B cell (primary cell): ENCODE measurements at regions of chr1 and their contacts with region 1.

Region 1: GRCh38 chr1:22420455-22421053 is 31.1 kb upstream of the ZBTB40 start:
- DNase-seq: peak; percentile 51
- ATAC-seq: peak; percentile 51
- H3K4me3 ChIP-seq: no peak overlapping the region
- H3K4me3 Mint-ChIP-seq: no peak overlapping the region
- H3K27ac ChIP-seq: no peak overlapping the region
- H3K27ac Mint-ChIP-seq: no peak overlapping the region
- H3K4me1 ChIP-seq: peaks cover 4 to 14% of the 10 kb centered on the region in 2 donors
- H3K4me1 Mint-ChIP-seq: peaks cover 11% of the 10 kb centered on the region
- H3K27me3 ChIP-seq: peaks cover 0 to 30% (median 12%) of the 10 kb centered on the region in 4 experiments
- H3K27me3 Mint-ChIP-seq: peaks cover 52% of the 10 kb centered on the region
- CTCF ChIP-seq: peak; percentile 31

Region 2: DNA sequence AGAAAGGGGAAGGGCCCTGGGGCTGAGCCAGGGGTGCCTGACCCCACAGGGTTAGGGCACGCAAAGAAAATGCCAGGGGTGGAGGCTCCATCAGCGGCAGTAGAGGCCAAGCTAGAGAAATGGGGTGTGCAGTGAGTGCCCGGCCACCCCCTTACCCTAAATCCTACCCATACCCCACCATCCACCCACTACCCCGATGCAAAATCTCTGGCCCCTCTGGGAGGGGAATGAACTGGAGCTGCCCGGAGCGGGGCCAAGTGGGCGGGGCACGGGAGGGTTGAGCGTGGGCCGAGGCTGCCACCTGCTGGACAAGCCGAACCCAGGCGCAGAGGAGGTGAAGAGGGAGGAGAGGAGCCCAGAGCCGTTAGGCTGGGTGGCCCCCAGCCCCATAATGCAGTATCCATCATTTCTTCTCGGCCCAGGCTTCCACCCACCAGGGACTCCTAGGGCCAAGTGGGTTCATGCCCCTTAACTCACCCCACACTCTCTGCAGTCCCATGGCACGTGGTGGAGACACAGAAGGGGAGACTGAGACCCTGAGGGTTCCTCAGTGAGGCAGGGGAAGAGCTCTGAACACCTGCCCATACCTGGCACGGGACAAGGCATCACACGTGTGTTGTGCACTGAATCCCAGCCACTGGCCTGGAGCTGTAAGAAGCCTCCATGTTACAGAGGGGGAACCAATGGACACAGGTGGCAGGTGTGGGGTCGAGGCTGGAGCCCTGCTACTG is 221.5 kb after region 1 on chr1:
- CTCF ChIA-PET with region 1: interaction called, 26 read pairs
- POLR2A ChIA-PET with region 1: no interaction called
- intact Hi-C with region 1: no loop called
- DNase-seq: peak; percentile 73
- ATAC-seq: peak; percentile 81
- H3K4me3 ChIP-seq: no peak overlapping the region
- H3K4me3 Mint-ChIP-seq: no peak overlapping the region
- H3K27ac ChIP-seq: no peak overlapping the region
- H3K27ac Mint-ChIP-seq: no peak overlapping the region
- H3K4me1 ChIP-seq: peaks cover 0 to 4% of the 10 kb centered on the region in 2 donors
- H3K4me1 Mint-ChIP-seq: no peaks in the 10 kb centered on the region
- H3K27me3 ChIP-seq: peaks cover 0 to 24% (median 0%) of the 10 kb centered on the region in 4 experiments
- H3K27me3 Mint-ChIP-seq: peaks cover 20% of the 10 kb centered on the region
- CTCF ChIP-seq: peak; percentile 81

Region 3: GRCh38 chr1:22963044-22963677 is 542.6 kb after region 1 on chr1:
- CTCF ChIA-PET with region 1: no interaction called
- POLR2A ChIA-PET with region 1: no interaction called
- intact Hi-C with region 1: loop called (anchors 5 kb)
- DNase-seq: no peak
- ATAC-seq: no peak
- H3K4me3 ChIP-seq: no peak overlapping the region
- H3K4me3 Mint-ChIP-seq: no peak overlapping the region
- H3K27ac ChIP-seq: no peak overlapping the region
- H3K27ac Mint-ChIP-seq: no peak overlapping the region
- H3K4me1 ChIP-seq: peaks cover 0 to 3% of the 10 kb centered on the region in 2 donors
- H3K4me1 Mint-ChIP-seq: no peaks in the 10 kb centered on the region
- H3K27me3 ChIP-seq: peaks cover 0 to 11% (median under 1%) of the 10 kb centered on the region in 4 experiments
- H3K27me3 Mint-ChIP-seq: peaks cover 23% of the 10 kb centered on the region
- CTCF ChIP-seq: no peak